Mammary epithelial cell (primary cell): ENCODE measurements at regions of chr11 and their contacts with region 1.

Region 1: GRCh38 chr11:1844221-1845094 is 5.7 kb downstream of the TNNI2 start:
- DNase-seq: no peak
- H3K4me3 ChIP-seq: no peak overlapping the region
- H3K27ac ChIP-seq: no peak overlapping the region
- H3K4me1 ChIP-seq: peaks cover 12% of the 10 kb centered on the region
- H3K27me3 ChIP-seq: no peaks in the 10 kb centered on the region
- CTCF ChIP-seq: no peak

Region 2: GRCh38 chr11:1546536-1547400 is 297.7 kb before region 1 on chr11:
- CTCF ChIA-PET with region 1: no interaction called
- dilution Hi-C with region 1: no loop called
- in situ Hi-C with region 1: no loop called
- intact Hi-C with region 1: no loop called
- DNase-seq: peak; percentile 35
- H3K4me3 ChIP-seq: peak overlapping the region in 2 of 3 experiments; percentile 11 to 27
- H3K27ac ChIP-seq: no peak overlapping the region
- H3K4me1 ChIP-seq: peaks cover 7% of the 10 kb centered on the region
- H3K27me3 ChIP-seq: peaks cover 16% of the 10 kb centered on the region
- CTCF ChIP-seq: peak; percentile 35 to 66

Region 3: DNA sequence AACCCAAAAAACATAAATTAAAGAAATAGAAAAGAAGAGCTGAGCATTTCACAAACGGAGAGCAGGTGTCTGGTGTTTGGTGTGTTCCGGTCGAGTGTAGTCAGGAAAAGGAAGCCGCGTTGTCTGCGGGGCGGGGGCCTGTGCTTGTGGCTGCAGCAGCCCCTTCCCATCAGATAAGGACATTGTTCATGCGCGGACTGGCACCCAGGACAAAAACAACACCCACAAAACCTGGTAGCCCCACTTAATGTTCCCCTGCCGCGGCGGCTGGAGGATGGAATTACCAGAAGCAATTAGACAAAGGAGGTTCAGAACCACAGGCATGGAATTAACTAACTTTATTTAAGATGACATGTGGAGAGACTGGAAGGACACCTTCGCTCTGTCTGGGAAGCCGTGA is 185.0 kb before region 1 on chr11:
- CTCF ChIA-PET with region 1: no interaction called
- dilution Hi-C with region 1: no loop called
- in situ Hi-C with region 1: no loop called
- intact Hi-C with region 1: no loop called
- DNase-seq: no peak
- H3K4me3 ChIP-seq: no peak overlapping the region
- H3K27ac ChIP-seq: no peak overlapping the region
- H3K4me1 ChIP-seq: peaks cover 15% of the 10 kb centered on the region
- H3K27me3 ChIP-seq: no peaks in the 10 kb centered on the region
- CTCF ChIP-seq: no peak

Region 4: DNA sequence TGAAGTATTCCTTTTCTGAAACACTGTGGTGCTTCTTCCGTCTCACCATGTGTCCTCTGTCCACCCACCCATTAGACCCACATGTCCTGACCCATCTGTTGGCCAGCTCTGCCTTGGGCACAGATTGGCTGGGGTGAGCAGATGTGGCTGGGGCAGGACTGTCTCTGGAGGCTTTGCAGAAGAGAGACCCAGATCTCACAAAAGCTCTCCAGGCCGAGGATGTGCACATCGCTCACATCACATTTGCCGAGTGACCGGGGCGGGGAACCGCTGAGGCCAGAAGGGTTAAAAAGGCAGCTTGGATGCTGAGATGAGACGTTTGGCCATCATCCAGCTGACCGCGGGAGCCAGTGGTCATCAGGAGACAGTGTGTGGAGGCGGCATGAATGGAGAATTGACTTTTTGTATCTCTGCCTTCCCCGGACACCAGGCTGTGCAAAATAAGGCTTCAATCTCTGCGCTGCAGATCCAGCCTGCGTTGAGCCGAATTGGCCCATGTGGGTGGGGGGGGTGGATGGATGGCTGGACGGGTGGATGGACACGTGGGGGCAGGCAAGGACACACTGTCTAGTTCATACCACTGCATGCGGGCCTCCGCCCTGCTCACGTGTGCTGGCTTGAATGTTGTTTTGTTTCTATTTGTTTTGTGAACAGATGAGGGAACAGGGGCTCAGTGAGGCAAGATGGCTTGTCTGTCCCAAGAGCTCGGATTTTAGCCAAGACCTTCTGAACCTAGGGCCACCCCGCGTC is 100.1 kb before region 1 on chr11:
- CTCF ChIA-PET with region 1: no interaction called
- dilution Hi-C with region 1: loop called (anchors 5 kb)
- in situ Hi-C with region 1: loop called in 1 of 2 experiments (anchors 10 kb)
- intact Hi-C with region 1: no loop called
- DNase-seq: no peak
- H3K4me3 ChIP-seq: no peak overlapping the region
- H3K27ac ChIP-seq: no peak overlapping the region
- H3K4me1 ChIP-seq: peaks cover 31% of the 10 kb centered on the region
- H3K27me3 ChIP-seq: no peaks in the 10 kb centered on the region
- CTCF ChIP-seq: peak in 1 of 2 donors; percentile 6

Region 5: GRCh38 chr11:1899686-1900085 is 55.2 kb after region 1 on chr11:
- CTCF ChIA-PET with region 1: no interaction called
- dilution Hi-C with region 1: loop called (anchors 5 kb)
- in situ Hi-C with region 1: no loop called
- intact Hi-C with region 1: no loop called
- DNase-seq: no peak
- H3K4me3 ChIP-seq: no peak overlapping the region
- H3K27ac ChIP-seq: no peak overlapping the region
- H3K4me1 ChIP-seq: no peaks in the 10 kb centered on the region
- H3K27me3 ChIP-seq: no peaks in the 10 kb centered on the region
- CTCF ChIP-seq: no peak